Activated naive CD4-positive, alpha-beta T cell treated with anti-CD3 and anti-CD28 coated beads for 36 hours (primary cell): ENCODE measurements at regions of chr1 and their contacts with region 1.

Region 1: GRCh38 chr1:42456010-42456758 is at the starts of genes PPCS and ZMYND12:
- DNase-seq: peak; percentile 94
- H3K4me3 Mint-ChIP-seq: peak within 1 kb of the TSS; percentile 95
- H3K27ac Mint-ChIP-seq: peak within 1 kb of the TSS; percentile 94
- H3K4me1 Mint-ChIP-seq: peaks cover 23% of the 10 kb centered on the region
- H3K27me3 Mint-ChIP-seq: no peaks in the 10 kb centered on the region
- total RNA-seq, gene PPCS: 47.4 to 49.6 TPM
- total RNA-seq, gene ZMYND12: 0.74 to 0.76 TPM

Region 2: GRCh38 chr1:42089246-42089645 is 366.9 kb before region 1 on chr1:
- CTCF ChIA-PET with region 1: no interaction called
- intact Hi-C with region 1: no loop called
- DNase-seq: no peak
- H3K4me3 Mint-ChIP-seq: no peak overlapping the region
- H3K27ac Mint-ChIP-seq: no peak overlapping the region
- H3K4me1 Mint-ChIP-seq: no peaks in the 10 kb centered on the region
- H3K27me3 Mint-ChIP-seq: peaks cover 9% of the 10 kb centered on the region

Region 3: GRCh38 chr1:42335050-42335808 is 121.0 kb before region 1 on chr1 and contains the start of gene FOXJ3:
- CTCF ChIA-PET with region 1: interaction called, 4 read pairs
- intact Hi-C with region 1: loop called (anchors 2 kb)
- DNase-seq: peak; percentile 93
- H3K4me3 Mint-ChIP-seq: peak within 1 kb of the TSS; percentile 92
- H3K27ac Mint-ChIP-seq: peak within 1 kb of the TSS; percentile 88
- H3K4me1 Mint-ChIP-seq: peaks cover 39% of the 10 kb centered on the region
- H3K27me3 Mint-ChIP-seq: no peaks in the 10 kb centered on the region
- total RNA-seq, gene FOXJ3: 35.6 to 37.2 TPM

Region 4: DNA sequence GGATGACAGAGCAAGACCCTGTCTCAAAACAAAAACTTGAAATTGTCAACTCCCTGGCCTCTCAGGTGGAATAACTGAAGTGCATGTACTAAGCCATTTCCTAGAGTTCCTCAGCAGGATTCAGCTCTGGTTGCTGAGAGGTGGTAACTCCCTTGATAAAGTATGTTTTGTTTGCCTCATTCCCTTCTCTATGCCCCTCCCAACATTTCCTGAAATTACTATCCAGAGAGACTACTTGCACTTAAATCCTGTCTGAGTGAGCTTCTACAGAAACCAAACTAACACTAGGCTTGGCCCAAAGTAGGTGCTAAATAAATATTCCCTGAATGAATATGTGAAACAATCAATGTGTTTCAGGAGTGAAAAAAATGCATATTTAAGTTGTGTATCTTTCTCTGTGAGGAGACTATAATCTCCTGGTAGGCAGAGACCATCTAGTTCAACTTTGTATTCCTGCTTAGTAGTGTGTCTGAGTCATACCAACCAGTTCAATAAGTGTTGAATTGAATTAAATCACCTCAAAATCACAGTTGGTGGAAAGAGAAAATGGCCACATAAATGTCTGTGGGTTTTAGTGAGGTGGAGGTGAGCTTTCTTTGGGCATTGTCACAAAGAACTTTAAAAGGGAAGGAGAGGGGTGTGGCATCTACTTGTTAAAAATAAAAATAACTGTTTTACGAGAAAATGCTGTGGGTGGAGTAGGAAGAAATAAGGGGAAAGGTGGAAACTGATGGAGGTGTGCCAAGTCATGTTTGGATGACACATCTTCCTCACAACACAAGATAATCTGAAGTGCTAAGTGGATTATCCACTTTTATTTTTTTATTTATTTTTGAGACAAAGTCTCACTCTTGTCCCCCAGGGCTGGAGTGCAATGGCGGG is 63.0 kb before region 1 on chr1:
- CTCF ChIA-PET with region 1: no interaction called
- intact Hi-C with region 1: loop called (anchors 2 kb)
- DNase-seq: no peak
- H3K4me3 Mint-ChIP-seq: no peak overlapping the region
- H3K27ac Mint-ChIP-seq: no peak overlapping the region
- H3K4me1 Mint-ChIP-seq: peaks cover 10% of the 10 kb centered on the region
- H3K27me3 Mint-ChIP-seq: no peaks in the 10 kb centered on the region

Region 5: GRCh38 chr1:42657971-42658879 is 202.0 kb after region 1 on chr1 and contains the start of gene PPIH:
- CTCF ChIA-PET with region 1: no interaction called
- intact Hi-C with region 1: loop called (anchors 1 kb)
- DNase-seq: peak; percentile 97
- H3K4me3 Mint-ChIP-seq: peak within 1 kb of the TSS; percentile 98
- H3K27ac Mint-ChIP-seq: peak within 1 kb of the TSS; percentile 94
- H3K4me1 Mint-ChIP-seq: peaks cover 36% of the 10 kb centered on the region
- H3K27me3 Mint-ChIP-seq: no peaks in the 10 kb centered on the region
- total RNA-seq, gene PPIH: 107 to 108 TPM

Region 6: DNA sequence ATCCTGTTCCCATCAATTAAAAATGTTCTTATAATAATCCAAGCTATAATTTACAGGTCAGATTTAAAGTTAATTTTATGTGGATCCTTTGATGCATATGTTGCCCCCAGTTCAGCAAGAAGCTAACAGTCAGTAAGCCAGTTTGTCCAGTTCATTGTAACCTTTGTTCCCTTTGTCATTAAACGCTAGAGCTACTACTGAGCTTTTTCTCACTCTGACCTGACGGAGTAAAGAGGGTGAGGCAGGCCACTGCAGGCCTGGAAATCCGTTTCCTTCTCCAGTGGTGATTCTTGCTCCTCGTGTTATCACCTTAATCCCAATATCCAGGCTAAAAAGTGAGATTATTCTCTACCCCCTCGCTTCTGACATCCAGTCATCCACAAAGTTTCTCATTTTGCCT is 236.3 kb after region 1 on chr1:
- CTCF ChIA-PET with region 1: no interaction called
- intact Hi-C with region 1: no loop called
- DNase-seq: no peak
- H3K4me3 Mint-ChIP-seq: no peak overlapping the region
- H3K27ac Mint-ChIP-seq: peak overlapping the region; percentile 63
- H3K4me1 Mint-ChIP-seq: peaks cover 72% of the 10 kb centered on the region
- H3K27me3 Mint-ChIP-seq: no peaks in the 10 kb centered on the region